Tibial artery (tissue), 4 donors: ENCODE measurements at regions of chr13 and their contacts with region 1.

Region 1: GRCh38 chr13:77329133-77329910 is 2.4 kb upstream of the MYCBP2 start:
- DNase-seq: peak; percentile 89 to 92
- H3K4me3 ChIP-seq: peak overlapping the region; percentile 81
- H3K27ac ChIP-seq: peak overlapping the region; percentile 80 to 85
- H3K4me1 ChIP-seq: peaks cover 0 to 31% (median 12%) of the 10 kb centered on the region in 4 donors
- H3K27me3 ChIP-seq: no peaks in the 10 kb centered on the region
- CTCF ChIP-seq: no peak

Region 2: GRCh38 chr13:75687150-75687763 is 1642.1 kb before region 1 on chr13:
- intact Hi-C with region 1: no loop called
- DNase-seq: no peak
- H3K4me3 ChIP-seq: no peak overlapping the region
- H3K27ac ChIP-seq: no peak overlapping the region
- H3K4me1 ChIP-seq: peaks cover 0 to 8% (median 0%) of the 10 kb centered on the region in 4 donors
- H3K27me3 ChIP-seq: no peaks in the 10 kb centered on the region
- CTCF ChIP-seq: peak; percentile 36 to 48

Region 3: GRCh38 chr13:76886292-76887075 is 442.8 kb before region 1 on chr13 and contains the start of gene KCTD12:
- intact Hi-C with region 1: no loop called
- DNase-seq: peak; percentile 90 to 94
- H3K4me3 ChIP-seq: peak within 1 kb of the TSS; percentile 69 to 78
- H3K27ac ChIP-seq: peak within 1 kb of the TSS; percentile 87 to 88
- H3K4me1 ChIP-seq: peaks cover 0 to 27% (median 12%) of the 10 kb centered on the region in 4 donors
- H3K27me3 ChIP-seq: no peaks in the 10 kb centered on the region
- CTCF ChIP-seq: peak in 1 of 2 experiments; percentile 34

Region 4: DNA sequence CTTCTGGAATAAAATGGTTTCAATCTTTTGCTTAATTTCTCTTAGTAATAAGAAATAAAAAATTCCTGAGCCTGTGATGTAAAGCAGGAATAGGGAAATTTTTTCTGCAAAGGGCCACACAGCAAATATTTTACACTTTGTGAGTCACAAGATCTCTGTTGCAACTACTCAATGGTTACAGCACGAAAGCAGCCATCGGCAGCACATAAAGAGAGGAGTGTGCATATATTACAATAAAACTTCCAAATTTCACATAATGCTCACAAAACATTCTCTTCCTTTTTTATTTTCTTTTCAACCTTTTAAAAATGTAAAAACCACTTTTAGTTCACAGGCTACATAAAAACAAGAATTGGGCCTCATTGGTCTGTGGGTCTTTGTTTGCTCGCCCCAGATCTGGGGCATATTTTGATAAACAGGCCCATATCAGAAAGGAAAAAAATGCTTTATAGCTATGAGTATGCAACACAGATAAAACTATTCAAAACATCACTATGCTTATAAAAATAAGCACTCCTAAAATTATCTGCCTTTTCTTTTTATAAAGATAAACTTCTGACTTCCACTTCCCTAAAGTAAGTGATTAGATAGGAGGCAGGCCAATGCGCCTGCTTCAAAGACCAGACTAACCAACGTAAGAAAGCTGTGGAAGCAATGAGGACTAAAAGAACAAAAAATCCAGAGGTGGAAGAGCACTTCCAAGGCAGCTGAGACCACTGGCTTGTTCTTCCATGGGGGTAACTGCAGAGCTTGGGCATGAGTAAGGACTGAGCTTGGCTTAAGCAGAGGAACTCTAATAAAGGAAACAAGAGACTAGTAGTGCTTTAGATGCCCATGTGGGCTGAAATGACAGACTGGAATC is 28.9 kb before region 1 on chr13:
- intact Hi-C with region 1: no loop called
- DNase-seq: no peak
- H3K4me3 ChIP-seq: no peak overlapping the region
- H3K27ac ChIP-seq: peak overlapping the region; percentile 21 to 65
- H3K4me1 ChIP-seq: peaks cover 0 to 53% (median 13%) of the 10 kb centered on the region in 4 donors
- H3K27me3 ChIP-seq: no peaks in the 10 kb centered on the region
- CTCF ChIP-seq: no peak

Region 5: GRCh38 chr13:77386880-77387606 is 57.7 kb after region 1 on chr13:
- intact Hi-C with region 1: loop called (anchors 5 kb)
- DNase-seq: peak; percentile 81 to 86
- H3K4me3 ChIP-seq: no peak overlapping the region
- H3K27ac ChIP-seq: peak overlapping the region; percentile 76 to 81
- H3K4me1 ChIP-seq: peaks cover 0 to 64% (median 39%) of the 10 kb centered on the region in 4 donors
- H3K27me3 ChIP-seq: no peaks in the 10 kb centered on the region
- CTCF ChIP-seq: no peak

Region 6: DNA sequence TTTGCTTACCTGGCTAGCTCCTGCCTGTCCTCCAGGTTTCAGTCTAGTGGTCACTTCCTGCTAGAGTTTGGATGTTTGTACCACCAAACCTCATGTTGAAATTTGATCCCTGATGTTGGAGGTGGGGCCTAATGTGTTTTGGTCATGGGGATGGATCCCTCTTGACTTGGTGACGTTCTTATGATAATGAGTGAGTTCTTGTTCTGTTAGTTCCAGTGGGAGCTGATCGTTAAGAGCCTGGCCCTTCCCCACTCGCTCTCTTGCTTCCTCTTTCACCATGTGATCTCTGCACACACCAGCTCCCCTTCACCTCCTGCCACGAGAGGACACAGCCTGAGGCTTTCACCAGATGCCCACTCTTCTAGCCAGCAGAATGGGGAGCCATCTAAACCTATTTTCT is 119.4 kb after region 1 on chr13:
- intact Hi-C with region 1: no loop called
- DNase-seq: no peak
- H3K4me3 ChIP-seq: no peak overlapping the region
- H3K27ac ChIP-seq: no peak overlapping the region
- H3K4me1 ChIP-seq: no peaks in the 10 kb centered on the region
- H3K27me3 ChIP-seq: no peaks in the 10 kb centered on the region
- CTCF ChIP-seq: no peak

Region 7: DNA sequence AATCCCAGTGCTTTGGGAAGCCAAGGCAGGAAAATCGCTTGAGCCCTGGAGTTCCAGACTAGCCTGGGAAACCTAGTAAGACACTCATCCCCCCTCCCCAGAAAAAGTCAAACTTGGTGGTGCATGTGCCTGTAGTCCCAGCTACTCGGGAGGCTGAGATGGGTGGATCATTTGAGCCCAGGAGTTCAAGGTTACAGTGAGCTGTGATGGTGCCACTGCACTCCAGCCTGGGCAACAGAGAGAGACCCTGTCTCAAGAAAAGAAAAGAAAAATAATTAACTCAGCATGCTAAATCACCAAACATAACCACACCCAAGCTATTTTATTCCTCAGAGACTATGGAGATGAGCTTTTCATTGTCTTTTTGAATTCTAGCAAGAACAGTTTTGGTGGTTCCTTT is 150.0 kb after region 1 on chr13:
- intact Hi-C with region 1: loop called (anchors 2 kb)
- DNase-seq: no peak
- H3K4me3 ChIP-seq: no peak overlapping the region
- H3K27ac ChIP-seq: no peak overlapping the region
- H3K4me1 ChIP-seq: peaks cover 0 to 13% (median 4%) of the 10 kb centered on the region in 4 donors
- H3K27me3 ChIP-seq: no peaks in the 10 kb centered on the region
- CTCF ChIP-seq: no peak

Region 8: DNA sequence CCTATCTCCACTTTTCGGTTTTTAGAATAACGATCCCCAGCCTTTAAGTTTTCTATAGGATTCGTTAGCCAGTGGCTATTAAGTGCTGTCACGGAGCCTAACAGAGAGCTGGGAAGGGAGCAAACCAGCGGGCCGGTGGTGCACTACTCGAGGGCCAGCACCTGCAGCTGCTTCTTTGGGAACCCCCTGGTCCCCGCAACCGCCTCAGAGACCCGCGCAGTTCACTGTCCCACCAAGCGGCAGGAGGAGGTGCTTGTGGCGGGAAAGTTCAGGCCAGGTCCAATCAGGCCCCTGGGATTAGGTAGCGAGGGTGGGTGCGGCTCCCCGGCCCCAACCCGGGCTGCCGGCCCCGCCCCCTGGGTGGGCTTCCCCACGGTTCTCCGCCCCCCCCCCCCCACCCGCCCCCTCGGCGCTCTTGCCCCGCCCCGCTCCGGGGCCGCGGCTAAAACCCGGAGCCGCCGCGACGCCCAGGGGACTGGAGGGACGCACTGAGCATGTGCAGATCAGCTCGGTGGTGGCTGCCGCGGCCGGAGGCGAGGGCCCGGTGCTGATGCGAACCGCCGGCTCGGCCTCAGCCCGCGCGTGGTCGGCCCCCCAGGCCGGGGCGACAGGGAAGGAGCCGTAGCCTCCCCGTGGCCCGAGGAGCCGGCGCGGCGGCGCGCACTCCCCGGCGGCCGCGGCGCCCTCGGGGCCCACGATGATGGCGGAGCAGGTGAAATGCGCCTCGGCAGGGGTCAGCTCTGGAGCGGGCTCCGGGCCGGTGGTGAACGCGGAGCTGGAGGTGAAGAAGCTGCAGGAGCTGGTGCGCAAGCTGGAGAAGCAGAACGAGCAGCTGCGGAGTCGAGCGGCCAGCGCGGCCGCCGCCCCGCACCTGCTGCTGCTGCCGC is 368.1 kb after region 1 on chr13 and contains the start of gene SLAIN1:
- intact Hi-C with region 1: loop called (anchors 10 kb)
- DNase-seq: peak; percentile 73 to 91
- H3K4me3 ChIP-seq: peak within 1 kb of the TSS; percentile 87 to 98
- H3K27ac ChIP-seq: peak within 1 kb of the TSS; percentile 75 to 80
- H3K4me1 ChIP-seq: peaks cover 0 to 16% (median 9%) of the 10 kb centered on the region in 4 donors
- H3K27me3 ChIP-seq: no peaks in the 10 kb centered on the region
- CTCF ChIP-seq: no peak